ENCODE measurements at regions of chr9 and their contacts with region 1.

Region 1: DNA sequence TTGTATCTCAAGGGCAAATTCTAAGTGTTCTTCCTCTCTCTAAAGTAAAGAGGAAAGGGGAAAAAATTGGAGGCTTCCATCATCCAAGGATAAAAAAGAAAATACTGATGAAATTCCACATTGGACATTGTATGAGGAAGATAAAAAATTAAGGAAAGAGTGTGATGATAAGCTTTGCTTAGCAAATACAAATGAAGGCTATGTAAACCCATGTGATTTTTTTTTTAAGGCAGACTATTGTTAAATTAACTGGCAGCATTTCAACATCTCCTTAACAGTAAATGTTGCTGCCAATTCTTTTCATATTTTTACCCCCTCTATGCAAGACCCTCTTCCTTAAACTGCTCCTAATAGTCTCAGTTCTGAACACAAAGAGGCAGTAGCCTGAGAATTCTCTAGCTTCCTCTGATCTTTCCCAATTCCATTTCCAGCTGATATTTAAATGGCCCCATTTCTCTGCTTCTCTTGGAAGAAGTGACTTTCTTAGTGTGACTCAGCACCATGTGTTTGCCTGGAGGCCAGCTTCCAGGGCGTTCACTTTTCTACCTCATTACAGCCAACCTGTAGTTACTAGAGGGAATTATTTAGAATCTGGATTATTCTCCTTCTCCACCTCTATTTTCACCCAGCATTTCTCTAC is 159.7 kb downstream of the TLE1 start:
- DNase-seq: peak in 1 of 2 donors; percentile 22
- ATAC-seq: no peak
- H3K4me3 ChIP-seq: no peak overlapping the region
- H3K27ac ChIP-seq: no peak overlapping the region
- H3K4me1 ChIP-seq: no peaks in the 10 kb centered on the region
- H3K27me3 ChIP-seq: no peaks in the 10 kb centered on the region
- CTCF ChIP-seq: no peak

Region 2: DNA sequence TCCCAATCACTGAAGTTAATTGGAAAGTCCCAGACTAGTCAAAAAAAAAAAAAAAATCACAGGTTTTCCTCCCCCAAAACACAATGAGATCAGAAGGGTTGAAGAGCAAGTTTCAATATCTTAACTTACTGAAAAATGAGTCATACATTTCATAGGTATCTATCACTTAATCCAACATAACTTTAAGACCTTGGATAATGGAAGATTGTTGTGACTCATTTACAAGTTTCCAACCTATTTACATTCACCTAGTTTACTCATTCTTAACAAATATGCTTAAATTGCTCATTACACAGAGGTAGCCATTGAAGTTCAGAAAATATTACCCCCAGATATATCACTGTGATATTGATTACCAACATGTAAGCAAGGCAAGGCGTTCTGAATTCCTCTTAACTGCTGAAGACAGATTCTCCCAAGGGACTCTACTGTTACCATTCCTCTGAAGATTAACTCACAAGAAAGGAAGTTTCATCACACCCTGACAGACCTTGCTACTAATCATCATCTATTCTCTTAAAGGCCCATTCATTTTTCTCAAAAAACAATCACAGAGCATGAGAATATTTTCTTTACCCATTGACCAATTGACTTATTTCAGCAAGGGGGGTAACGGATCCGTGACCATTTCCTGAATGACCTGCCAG is 404.1 kb before region 1 on chr9:
- intact Hi-C with region 1: no loop called
- DNase-seq: no peak
- ATAC-seq: no peak
- H3K4me3 ChIP-seq: no peak overlapping the region
- H3K27ac ChIP-seq: no peak overlapping the region
- H3K4me1 ChIP-seq: no peaks in the 10 kb centered on the region
- H3K27me3 ChIP-seq: peaks cover 0 to 1% (median 0%) of the 10 kb centered on the region in 3 donors
- CTCF ChIP-seq: no peak

Region 3: GRCh38 chr9:81609782-81610739 is 80.4 kb after region 1 on chr9:
- intact Hi-C with region 1: loop called in 1 of 2 experiments (anchors 5 kb)
- DNase-seq: peak in 1 of 2 donors; percentile 59
- ATAC-seq: peak; percentile 43 to 73 (median 66)
- H3K4me3 ChIP-seq: no peak overlapping the region
- H3K27ac ChIP-seq: peak overlapping the region; percentile 82
- H3K4me1 ChIP-seq: peaks cover 30% of the 10 kb centered on the region
- H3K27me3 ChIP-seq: no peaks in the 10 kb centered on the region
- CTCF ChIP-seq: no peak

Region 4: DNA sequence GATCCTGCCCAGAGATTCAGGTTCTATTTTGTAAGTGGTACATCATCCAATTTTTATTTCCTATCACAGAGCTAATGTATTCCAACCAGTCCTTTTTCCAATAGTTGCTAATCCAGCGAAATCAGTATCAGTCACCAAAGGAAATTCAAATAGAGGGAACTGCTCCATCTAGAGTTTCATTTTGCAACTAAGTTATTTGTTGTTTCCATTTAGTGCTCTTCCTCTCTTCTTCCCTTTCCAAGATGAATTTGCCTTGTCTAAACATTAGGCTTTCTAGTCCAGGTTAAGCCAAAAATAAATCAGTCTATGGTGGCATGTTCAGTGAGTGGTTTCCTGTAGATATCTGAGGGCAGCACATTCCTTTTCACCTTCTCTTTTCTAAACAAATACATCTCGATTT is 318.8 kb after region 1 on chr9:
- intact Hi-C with region 1: loop called in 1 of 2 experiments (anchors 10 kb)
- DNase-seq: no peak
- ATAC-seq: peak in 1 of 4 donors; percentile 65
- H3K4me3 ChIP-seq: no peak overlapping the region
- H3K27ac ChIP-seq: no peak overlapping the region
- H3K4me1 ChIP-seq: peaks cover 9% of the 10 kb centered on the region
- H3K27me3 ChIP-seq: no peaks in the 10 kb centered on the region
- CTCF ChIP-seq: peak; percentile 37

Measured in psoas muscle (tissue), 8 donors.